ENCODE measurements at regions of chr2 and their contacts with region 1.

Region 1: GRCh38 chr2:106193977-106194778 is at the start of gene UXS1:
- DNase-seq: peak; percentile 89 to 97
- H3K4me3 ChIP-seq: peak within 1 kb of the TSS; percentile 94
- H3K27ac ChIP-seq: peak within 1 kb of the TSS; percentile 56
- H3K4me1 ChIP-seq: peaks cover 18% of the 10 kb centered on the region
- H3K27me3 ChIP-seq: no peaks in the 10 kb centered on the region
- CTCF ChIP-seq: no peak
- total RNA-seq, gene UXS1: 61.3 and 65.6 TPM in 2 replicates

Region 2: GRCh38 chr2:105541189-105542050 is 652.8 kb before region 1 on chr2:
- CTCF ChIA-PET with region 1: no interaction called
- POLR2A ChIA-PET with region 1: no interaction called
- intact Hi-C with region 1: no loop called
- DNase-seq: peak; percentile 40 to 97
- H3K4me3 ChIP-seq: no peak overlapping the region
- H3K27ac ChIP-seq: no peak overlapping the region
- H3K4me1 ChIP-seq: peaks cover 24% of the 10 kb centered on the region
- H3K27me3 ChIP-seq: peaks cover 12% of the 10 kb centered on the region; the same call in 1 of the 2 replicates
- CTCF ChIP-seq: no peak

Region 3: DNA sequence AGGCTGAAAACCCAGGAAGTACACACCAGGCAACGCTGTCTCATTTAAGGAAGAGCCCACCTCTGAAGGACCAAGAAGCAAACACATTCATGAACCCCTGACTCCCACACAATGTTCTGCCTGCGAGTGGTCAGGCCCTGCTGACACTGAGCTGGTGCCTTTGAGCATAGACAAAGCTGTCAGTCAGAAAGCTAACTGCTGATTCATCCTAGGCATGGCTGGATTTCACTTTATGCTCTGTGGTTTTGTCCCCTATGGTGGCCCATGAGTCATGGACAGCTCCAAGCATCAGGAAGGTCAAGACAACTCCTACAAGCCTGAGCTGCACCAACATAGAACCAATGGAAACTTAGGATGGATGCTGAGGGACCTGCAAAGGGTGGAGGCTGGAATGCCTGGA is 78.9 kb before region 1 on chr2:
- CTCF ChIA-PET with region 1: no interaction called
- POLR2A ChIA-PET with region 1: no interaction called
- intact Hi-C with region 1: loop called (anchors 1 kb)
- DNase-seq: peak; percentile 66 to 86
- H3K4me3 ChIP-seq: no peak overlapping the region
- H3K27ac ChIP-seq: peak overlapping the region; percentile 63
- H3K4me1 ChIP-seq: peaks cover 30% of the 10 kb centered on the region
- H3K27me3 ChIP-seq: no peaks in the 10 kb centered on the region
- CTCF ChIP-seq: no peak

Region 4: GRCh38 chr2:106147159-106147558 is 47.0 kb before region 1 on chr2:
- CTCF ChIA-PET with region 1: no interaction called
- POLR2A ChIA-PET with region 1: no interaction called
- intact Hi-C with region 1: loop called (anchors 5 kb)
- DNase-seq: peak in 1 of 2 experiments; percentile 76
- H3K4me3 ChIP-seq: no peak overlapping the region
- H3K27ac ChIP-seq: peak overlapping the region; percentile 67
- H3K4me1 ChIP-seq: peaks cover 32% of the 10 kb centered on the region
- H3K27me3 ChIP-seq: no peaks in the 10 kb centered on the region
- CTCF ChIP-seq: no peak

Region 5: GRCh38 chr2:106161919-106162814 is 32.0 kb before region 1 on chr2:
- CTCF ChIA-PET with region 1: no interaction called
- POLR2A ChIA-PET with region 1: interaction called, 8 read pairs
- intact Hi-C with region 1: loop called (anchors 1 kb)
- DNase-seq: peak; percentile 80 to 97
- H3K4me3 ChIP-seq: peak overlapping the region; percentile 42
- H3K27ac ChIP-seq: peak overlapping the region; percentile 87
- H3K4me1 ChIP-seq: peaks cover 49% of the 10 kb centered on the region
- H3K27me3 ChIP-seq: no peaks in the 10 kb centered on the region
- CTCF ChIP-seq: no peak